ENCODE measurements at regions of chr2 and their contacts with region 1.

Region 1: GRCh38 chr2:216698895-216699294 is 3.5 kb upstream of the IGFBP5 start:
- DNase-seq: no peak
- ATAC-seq: peak; percentile 47 to 52
- H3K4me3 ChIP-seq: no peak overlapping the region
- H3K27ac ChIP-seq: no peak overlapping the region
- H3K4me1 ChIP-seq: peaks cover 3% of the 10 kb centered on the region
- H3K27me3 ChIP-seq: no peaks in the 10 kb centered on the region

Region 2: DNA sequence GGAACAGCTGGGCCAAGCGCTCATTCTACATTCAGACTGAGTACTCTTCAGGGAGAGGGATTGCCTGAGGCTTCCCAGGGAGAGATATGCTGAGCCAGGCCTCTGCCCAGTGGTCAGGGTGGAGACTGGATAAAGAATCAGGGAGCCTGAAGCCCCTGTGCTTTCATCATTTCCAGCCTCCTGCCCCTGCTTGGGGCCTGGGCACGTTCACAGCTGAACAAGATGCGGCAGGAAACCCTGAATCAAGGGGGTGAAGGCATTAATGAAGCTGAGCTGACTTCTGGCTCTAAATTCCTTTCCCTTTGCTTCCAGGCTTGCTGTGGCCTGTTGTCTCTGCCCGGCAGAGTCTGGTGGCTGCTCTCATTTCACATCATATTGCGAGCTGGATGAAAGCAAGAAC is 165.3 kb before region 1 on chr2:
- intact Hi-C with region 1: no loop called
- DNase-seq: no peak
- ATAC-seq: no peak
- H3K4me3 ChIP-seq: no peak overlapping the region
- H3K27ac ChIP-seq: peak overlapping the region; percentile 82
- H3K4me1 ChIP-seq: peaks cover 23% of the 10 kb centered on the region
- H3K27me3 ChIP-seq: no peaks in the 10 kb centered on the region

Region 3: GRCh38 chr2:216765761-216766262 is 66.9 kb after region 1 on chr2:
- intact Hi-C with region 1: loop called in 2 of 4 experiments (anchors 5 to 10 kb)
- DNase-seq: peak; percentile 66 to 82 (median 81)
- ATAC-seq: peak; percentile 85 to 95
- H3K4me3 ChIP-seq: no peak overlapping the region
- H3K27ac ChIP-seq: peak overlapping the region; percentile 0
- H3K4me1 ChIP-seq: no peaks in the 10 kb centered on the region
- H3K27me3 ChIP-seq: no peaks in the 10 kb centered on the region

Region 4: GRCh38 chr2:216989340-216990129 is 290.6 kb after region 1 on chr2:
- intact Hi-C with region 1: loop called in 3 of 4 experiments (anchors 10 kb)
- DNase-seq: no peak
- ATAC-seq: peak in 1 of 2 donors; percentile 21
- H3K4me3 ChIP-seq: no peak overlapping the region
- H3K27ac ChIP-seq: no peak overlapping the region
- H3K4me1 ChIP-seq: peaks cover 6% of the 10 kb centered on the region
- H3K27me3 ChIP-seq: no peaks in the 10 kb centered on the region

Region 5: GRCh38 chr2:217393585-217394032 is 694.7 kb after region 1 on chr2:
- intact Hi-C with region 1: loop called in 1 of 4 experiments (anchors 10 kb)
- DNase-seq: peak; percentile 57 to 84 (median 83)
- ATAC-seq: peak; percentile 96
- H3K4me3 ChIP-seq: no peak overlapping the region
- H3K27ac ChIP-seq: peak overlapping the region; percentile 48
- H3K4me1 ChIP-seq: no peaks in the 10 kb centered on the region
- H3K27me3 ChIP-seq: no peaks in the 10 kb centered on the region

Region 6: DNA sequence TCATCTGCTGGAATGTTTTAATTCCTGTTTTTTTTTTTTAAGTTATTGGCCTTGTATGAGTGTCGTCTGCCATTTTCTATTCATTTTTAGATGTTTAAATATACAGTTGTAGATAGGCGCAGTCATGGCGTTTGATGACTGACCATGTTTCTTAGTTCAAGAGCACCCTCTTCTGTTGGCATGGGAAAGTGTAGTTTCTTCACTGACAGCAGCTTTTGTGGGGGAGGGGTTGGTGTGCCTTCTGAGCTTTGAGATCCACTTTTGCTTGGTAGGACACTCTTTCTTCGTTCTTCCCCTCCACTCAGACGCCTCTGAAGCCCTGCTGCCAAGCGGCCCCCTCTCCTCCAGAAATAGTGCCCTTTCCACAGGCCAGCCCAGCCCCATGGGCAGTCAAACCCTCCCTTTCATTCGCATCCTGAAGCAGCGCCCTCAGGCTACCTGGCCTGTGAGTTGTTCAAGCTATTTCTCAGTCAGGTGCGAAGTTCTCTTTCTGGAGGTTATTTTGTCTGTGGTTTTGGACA is 811.9 kb after region 1 on chr2:
- intact Hi-C with region 1: loop called in 3 of 4 experiments (anchors 5 kb)
- DNase-seq: peak; percentile 47 to 70 (median 62)
- ATAC-seq: peak; percentile 85 to 92
- H3K4me3 ChIP-seq: no peak overlapping the region
- H3K27ac ChIP-seq: no peak overlapping the region
- H3K4me1 ChIP-seq: peaks cover 7% of the 10 kb centered on the region
- H3K27me3 ChIP-seq: no peaks in the 10 kb centered on the region

Measured in right cardiac atrium (tissue), 5 donors.